AG04450 (cell line): ENCODE measurements at regions of chr11 and their contacts with region 1.

Region 1: DNA sequence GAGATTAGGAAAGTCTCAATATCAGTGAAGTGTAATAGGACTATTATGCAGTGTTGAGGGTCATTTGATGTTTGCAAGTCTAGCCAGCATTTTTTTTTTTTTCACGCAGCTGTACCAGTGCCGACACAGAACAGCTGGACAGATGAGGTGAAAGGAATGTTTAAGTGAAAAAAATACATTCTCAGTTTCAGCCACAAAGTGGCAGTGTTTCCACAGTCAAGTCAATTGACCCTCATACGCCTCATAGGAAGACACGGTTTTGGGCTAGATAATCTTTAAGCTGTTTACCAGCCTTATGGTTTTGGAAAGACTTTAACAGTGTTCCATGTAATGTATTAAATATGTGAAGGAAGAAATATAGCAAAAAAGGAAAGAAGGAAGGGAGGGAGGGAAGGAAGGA is 349.9 kb upstream of the ANO3 start:
- DNase-seq: peak; percentile 62
- H3K4me3 ChIP-seq: no peak overlapping the region
- H3K27ac ChIP-seq: no peak overlapping the region
- H3K27me3 ChIP-seq: no peaks in the 10 kb centered on the region
- CTCF ChIP-seq: peak; percentile 63

Region 2: DNA sequence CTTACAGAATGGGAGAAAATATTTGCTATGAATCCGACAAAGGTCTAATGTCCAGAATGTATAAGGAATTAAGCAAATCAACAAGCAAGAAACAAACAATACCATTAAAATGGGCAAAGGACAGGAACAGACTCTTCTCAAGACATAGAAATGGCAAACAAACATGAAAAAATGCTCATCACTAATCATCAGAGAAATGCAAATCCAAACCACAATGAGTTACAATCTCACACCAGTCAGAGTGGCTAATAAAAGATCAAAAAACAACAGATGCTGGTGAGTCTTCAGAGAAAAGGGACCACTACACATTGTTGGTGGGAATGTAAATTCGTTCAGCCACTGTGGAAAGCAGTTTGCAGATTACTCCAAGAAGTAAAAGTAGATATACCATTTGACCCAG is 32.1 kb before region 1 on chr11:
- CTCF ChIA-PET with region 1: no interaction called
- POLR2A ChIA-PET with region 1: no interaction called
- DNase-seq: no peak
- H3K4me3 ChIP-seq: no peak overlapping the region
- H3K27ac ChIP-seq: no peak overlapping the region
- H3K27me3 ChIP-seq: no peaks in the 10 kb centered on the region
- CTCF ChIP-seq: no peak

Region 3: GRCh38 chr11:25992294-25992693 is 10.3 kb after region 1 on chr11:
- CTCF ChIA-PET with region 1: interaction called, 43 read pairs
- POLR2A ChIA-PET with region 1: no interaction called
- DNase-seq: no peak
- H3K4me3 ChIP-seq: no peak overlapping the region
- H3K27ac ChIP-seq: no peak overlapping the region
- H3K27me3 ChIP-seq: no peaks in the 10 kb centered on the region
- CTCF ChIP-seq: no peak

Region 4: GRCh38 chr11:26028294-26028954 is 46.4 kb after region 1 on chr11:
- CTCF ChIA-PET with region 1: interaction called, 11 read pairs
- POLR2A ChIA-PET with region 1: no interaction called
- DNase-seq: peak; percentile 13
- H3K4me3 ChIP-seq: no peak overlapping the region
- H3K27ac ChIP-seq: no peak overlapping the region
- H3K27me3 ChIP-seq: no peaks in the 10 kb centered on the region
- CTCF ChIP-seq: no peak

Region 5: DNA sequence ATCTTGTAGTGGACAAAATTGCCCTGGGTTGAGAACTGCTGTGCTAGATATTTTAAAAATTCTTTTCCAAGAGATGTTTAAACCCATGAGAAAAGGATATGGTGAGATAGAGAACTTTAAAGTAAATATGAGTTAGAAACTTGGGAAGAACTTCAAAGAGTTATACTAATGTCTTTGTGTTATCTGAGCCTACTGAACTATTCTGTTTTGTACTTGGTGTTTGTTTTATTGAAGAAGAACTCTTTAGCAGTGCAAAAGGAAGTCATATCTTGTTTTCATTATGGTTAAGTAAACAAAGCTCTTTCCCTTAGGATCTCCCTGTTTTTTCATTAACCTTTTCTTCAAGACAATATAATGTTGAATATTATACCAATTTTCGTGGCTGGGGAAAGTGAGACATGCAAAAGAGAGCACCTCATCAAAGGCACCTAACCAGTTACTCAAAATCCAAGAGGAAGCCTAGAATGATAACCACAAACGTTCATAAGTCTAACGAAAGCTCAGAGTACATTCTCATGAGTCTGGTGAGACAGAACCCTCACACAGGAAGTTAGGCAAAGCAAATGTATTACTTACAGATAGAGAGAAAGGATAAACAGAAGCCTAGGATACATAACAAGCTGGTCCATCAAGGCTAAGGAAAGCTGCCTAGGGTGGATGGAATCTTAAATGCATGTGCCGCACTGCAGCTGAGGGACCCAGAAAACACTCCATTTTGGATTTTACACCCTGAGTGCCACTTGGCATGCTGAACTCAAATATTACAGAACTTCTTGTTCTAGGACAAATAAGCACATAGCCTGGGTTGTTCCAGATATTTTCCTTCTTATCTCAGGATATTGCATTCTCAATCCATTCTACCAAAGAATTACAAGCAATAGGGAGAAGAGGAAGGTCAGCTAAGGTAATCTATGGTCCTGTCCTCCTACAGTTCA is 237.5 kb after region 1 on chr11:
- CTCF ChIA-PET with region 1: interaction called, 140 read pairs
- POLR2A ChIA-PET with region 1: no interaction called
- DNase-seq: no peak
- H3K4me3 ChIP-seq: no peak overlapping the region
- H3K27ac ChIP-seq: no peak overlapping the region
- H3K27me3 ChIP-seq: no peaks in the 10 kb centered on the region
- CTCF ChIP-seq: no peak

Region 6: DNA sequence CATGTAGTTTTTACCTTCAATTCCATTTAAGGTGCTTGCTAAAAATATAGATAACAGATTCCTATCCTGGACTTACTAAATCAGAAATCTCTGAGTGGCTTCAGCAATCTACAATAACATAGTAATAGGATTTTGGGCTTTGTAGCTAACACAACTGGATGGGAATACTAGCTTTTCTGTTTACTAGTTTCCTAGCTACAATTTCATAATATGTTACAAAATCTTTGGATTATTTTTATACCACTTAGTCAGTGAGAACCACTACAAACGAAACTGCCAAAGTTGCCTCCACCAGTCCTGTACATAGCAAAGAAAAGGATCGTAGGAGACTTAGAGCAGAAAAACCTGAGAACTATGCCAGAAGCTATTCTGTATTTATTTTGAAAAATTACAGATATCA is 262.2 kb after region 1 on chr11:
- CTCF ChIA-PET with region 1: interaction called, 16 read pairs
- POLR2A ChIA-PET with region 1: no interaction called
- DNase-seq: no peak
- H3K4me3 ChIP-seq: no peak overlapping the region
- H3K27ac ChIP-seq: no peak overlapping the region
- H3K27me3 ChIP-seq: no peaks in the 10 kb centered on the region
- CTCF ChIP-seq: no peak

Region 7: GRCh38 chr11:26276798-26277424 is 294.9 kb after region 1 on chr11:
- CTCF ChIA-PET with region 1: interaction called, 36 read pairs
- POLR2A ChIA-PET with region 1: no interaction called
- DNase-seq: peak; percentile 20
- H3K4me3 ChIP-seq: no peak overlapping the region
- H3K27ac ChIP-seq: no peak overlapping the region
- H3K27me3 ChIP-seq: no peaks in the 10 kb centered on the region
- CTCF ChIP-seq: peak; percentile 99

Region 8: DNA sequence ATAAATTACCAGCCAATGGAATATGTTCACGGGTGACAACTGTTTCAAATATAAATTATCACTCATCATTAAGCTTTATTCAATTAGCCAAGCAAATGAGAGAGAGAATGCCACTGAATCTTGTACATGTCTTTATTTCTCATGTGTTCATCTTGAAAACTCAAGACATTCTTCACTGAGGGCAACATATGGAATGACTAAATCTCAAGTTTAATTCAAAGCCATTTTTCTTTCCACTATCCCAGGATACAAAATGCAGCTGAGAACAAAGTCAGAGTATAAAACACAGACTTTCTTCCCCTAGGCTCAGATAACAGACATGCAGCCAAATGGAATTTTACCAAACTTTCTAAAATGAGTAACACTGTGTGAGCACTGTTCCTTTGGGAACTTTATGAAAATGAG is 1046.6 kb after region 1 on chr11:
- CTCF ChIA-PET with region 1: no interaction called
- POLR2A ChIA-PET with region 1: interaction called, 10 read pairs
- DNase-seq: no peak
- H3K4me3 ChIP-seq: no peak overlapping the region
- H3K27ac ChIP-seq: no peak overlapping the region
- H3K27me3 ChIP-seq: no peaks in the 10 kb centered on the region
- CTCF ChIP-seq: no peak